ENCODE measurements at regions of chr18 and their contacts with region 1.

Region 1: DNA sequence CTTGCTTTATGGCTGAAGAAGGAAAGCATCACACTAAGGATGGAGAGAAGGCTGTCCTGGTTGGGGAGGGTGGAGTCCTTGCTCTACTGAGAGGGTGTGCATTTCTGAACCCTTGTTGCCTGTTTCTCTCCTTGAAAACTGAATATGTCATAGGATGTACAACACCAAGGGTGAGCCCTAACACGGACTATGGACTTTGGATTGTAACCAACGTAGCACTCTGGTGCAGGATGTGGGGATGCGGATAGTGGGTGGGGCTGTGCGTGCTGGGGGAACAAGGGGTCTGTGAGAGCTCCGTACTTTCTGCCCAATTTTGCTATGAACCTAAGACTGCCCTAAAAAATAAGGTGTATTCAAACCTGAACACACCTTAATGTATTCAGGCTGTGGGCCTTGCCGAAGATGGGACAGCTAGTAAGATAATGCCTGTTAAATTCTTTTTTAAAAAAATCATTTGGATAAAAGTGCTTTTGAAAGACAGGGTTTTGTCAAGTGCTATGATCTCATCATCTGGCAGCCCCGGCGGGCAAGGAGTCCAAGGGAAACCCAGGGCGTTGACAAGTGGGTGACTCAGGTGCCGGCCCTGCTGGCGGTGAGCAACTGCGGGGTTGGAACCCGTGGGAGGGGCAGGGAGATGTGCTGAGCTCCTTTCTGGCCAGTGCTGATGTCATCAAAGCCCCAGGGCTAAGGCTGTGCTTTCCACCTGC is 54.0 kb downstream of the GATA6 start:
- DNase-seq: peak; percentile 56 to 95 (median 78)
- ATAC-seq: peak; percentile 46 to 99 (median 91)
- H3K4me3 ChIP-seq: no peak overlapping the region
- H3K27ac ChIP-seq: no peak overlapping the region
- H3K4me1 ChIP-seq: peaks cover 0 to 12% (median 5%) of the 10 kb centered on the region in 12 donors
- H3K27me3 ChIP-seq: no peaks in the 10 kb centered on the region
- CTCF ChIP-seq: no peak
- POLR2A ChIP-seq: no peak

Region 2: DNA sequence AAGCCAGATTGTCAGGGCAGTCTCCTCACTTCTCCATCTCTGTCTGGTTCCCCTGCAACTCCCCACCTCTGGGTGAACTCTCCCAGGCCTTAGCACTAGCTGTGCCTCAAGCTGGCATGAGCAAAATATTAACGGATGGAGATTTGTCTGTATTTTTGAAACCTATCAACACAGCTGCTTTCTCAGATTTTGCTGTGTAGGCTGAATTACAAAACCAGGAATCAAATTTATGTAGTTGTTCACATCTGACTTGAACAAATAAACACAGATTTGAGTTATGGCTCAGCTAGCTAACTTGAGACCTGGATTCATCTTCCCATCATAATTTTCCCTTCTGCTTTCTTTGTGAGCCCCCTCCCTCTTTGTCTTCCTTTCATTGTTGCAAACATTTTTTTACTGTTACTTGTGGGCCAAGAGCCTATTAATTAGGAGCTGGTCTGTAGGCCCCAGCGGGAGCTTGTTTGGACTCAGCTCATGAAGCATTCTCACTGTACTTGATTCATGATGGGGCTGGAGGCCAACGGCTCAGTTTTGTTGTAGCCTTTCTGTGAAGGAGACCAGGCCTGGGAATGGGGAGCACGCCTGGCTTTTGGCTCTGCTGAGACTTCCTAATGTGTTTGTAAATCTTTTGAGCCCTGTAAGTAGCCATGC is 218.1 kb before region 1 on chr18:
- intact Hi-C with region 1: loop called in 1 of 10 experiments (anchors 10 kb)
- DNase-seq: peak in 1 of 5 donors; percentile 49
- ATAC-seq: no peak
- H3K4me3 ChIP-seq: no peak overlapping the region
- H3K27ac ChIP-seq: peak overlapping the region in 1 of 12 donors; percentile 5
- H3K4me1 ChIP-seq: peaks cover 0 to 11% (median under 1%) of the 10 kb centered on the region in 12 donors
- H3K27me3 ChIP-seq: no peaks in the 10 kb centered on the region
- CTCF ChIP-seq: no peak
- POLR2A ChIP-seq: no peak

Region 3: DNA sequence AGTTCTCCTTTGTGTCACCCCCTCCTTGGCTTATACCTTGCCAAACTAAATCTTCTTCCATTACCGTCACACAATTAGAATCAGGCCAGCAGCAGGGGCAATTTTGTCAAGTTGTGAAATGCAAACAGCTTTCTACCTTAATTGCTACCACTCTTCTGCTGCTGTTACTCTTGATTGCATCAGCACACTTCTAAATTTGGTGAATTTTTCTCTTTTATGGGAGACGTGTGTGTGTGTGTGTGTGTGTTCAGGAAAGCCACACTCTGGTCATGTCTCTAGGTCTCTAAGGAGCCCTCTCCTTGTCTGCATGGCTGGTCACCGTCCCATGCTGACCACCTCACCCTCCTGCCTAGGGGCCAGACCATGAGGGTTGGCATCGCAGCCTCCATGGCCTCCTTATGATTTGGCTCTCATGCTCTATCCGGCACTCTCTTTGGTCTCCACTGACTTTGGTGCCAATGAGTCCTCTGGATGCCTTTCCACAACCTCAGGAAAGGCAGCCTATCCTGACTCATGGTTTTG is 33.7 kb after region 1 on chr18:
- intact Hi-C with region 1: loop called in 2 of 10 experiments (anchors 5 to 10 kb)
- DNase-seq: no peak
- ATAC-seq: no peak
- H3K4me3 ChIP-seq: no peak overlapping the region
- H3K27ac ChIP-seq: no peak overlapping the region
- H3K4me1 ChIP-seq: peaks cover 0 to 43% (median 11%) of the 10 kb centered on the region in 12 donors
- H3K27me3 ChIP-seq: no peaks in the 10 kb centered on the region
- CTCF ChIP-seq: no peak
- POLR2A ChIP-seq: no peak